ENCODE measurements at regions of chr1 and their contacts with region 1.

Region 1: DNA sequence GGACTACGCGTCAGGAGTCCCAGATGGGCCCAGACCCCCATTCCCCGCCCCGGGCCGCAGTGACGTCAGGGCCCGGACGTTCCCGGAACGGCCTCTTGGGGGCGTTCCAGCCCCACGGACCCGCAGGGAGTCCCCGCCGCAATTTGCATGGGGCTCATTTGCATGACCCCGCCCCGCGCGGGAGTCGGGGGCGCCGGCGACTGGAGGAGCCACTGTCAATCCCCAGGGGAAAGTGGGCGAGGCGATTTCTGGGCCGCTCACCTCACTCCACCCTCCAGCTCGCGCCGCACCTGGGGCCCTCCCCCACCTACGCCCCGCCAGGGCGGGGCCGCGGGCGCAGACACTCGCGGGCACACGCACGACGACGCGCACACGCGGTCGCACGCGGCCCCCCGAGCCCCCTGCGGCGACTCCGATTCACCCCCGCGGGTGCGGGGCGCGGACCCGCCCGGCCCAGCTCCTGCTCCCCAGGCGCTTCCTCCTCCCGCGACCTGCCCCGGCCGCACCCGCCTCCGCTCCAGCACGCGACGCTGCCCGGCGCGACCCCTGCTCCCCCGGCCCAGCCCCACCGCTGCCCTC is 13.2 kb downstream of the AGRN start:
- DNase-seq: peak; percentile 68 to 69
- H3K4me3 ChIP-seq: peak overlapping the region; percentile 18 to 23
- H3K27ac ChIP-seq: no peak overlapping the region
- H3K4me1 ChIP-seq: peaks cover 0 to 19% of the 10 kb centered on the region in 2 donors
- H3K27me3 ChIP-seq: peaks cover 0 to 8% of the 10 kb centered on the region in 2 donors
- CTCF ChIP-seq: peak; percentile 55 to 85 (median 70)
- POLR2A ChIP-seq: no peak

Region 2: GRCh38 chr1:1069061-1069708 is 36.1 kb after region 1 on chr1:
- intact Hi-C with region 1: loop called (anchors 5 kb)
- DNase-seq: peak; percentile 32 to 63
- H3K4me3 ChIP-seq: peak overlapping the region in 1 of 2 donors; percentile 26
- H3K27ac ChIP-seq: no peak overlapping the region
- H3K4me1 ChIP-seq: peaks cover 0 to 12% of the 10 kb centered on the region in 2 donors
- H3K27me3 ChIP-seq: peaks cover 4 to 16% of the 10 kb centered on the region in 2 donors
- CTCF ChIP-seq: no peak
- POLR2A ChIP-seq: peak in 1 of 2 donors; percentile 26

Measured in uterus (tissue), 4 donors.